Lower lobe of right lung (tissue), 2 donors: ENCODE measurements at regions of chr3 and their contacts with region 1.

Region 1: GRCh38 chr3:194682694-194683310 is 2.9 kb upstream of the FAM43A start:
- DNase-seq: peak; percentile 60
- ATAC-seq: peak; percentile 80
- H3K4me3 ChIP-seq: no peak overlapping the region
- H3K27ac ChIP-seq: peak overlapping the region; percentile 37
- H3K4me1 ChIP-seq: peaks cover 41% of the 10 kb centered on the region
- H3K27me3 ChIP-seq: peaks cover 5% of the 10 kb centered on the region
- CTCF ChIP-seq: peak; percentile 88

Region 2: GRCh38 chr3:194556086-194557056 is 126.4 kb before region 1 on chr3:
- intact Hi-C with region 1: no loop called
- DNase-seq: no peak
- ATAC-seq: peak in 1 of 2 donors; percentile 52
- H3K4me3 ChIP-seq: peak overlapping the region; percentile 27
- H3K27ac ChIP-seq: no peak overlapping the region
- H3K4me1 ChIP-seq: no peaks in the 10 kb centered on the region
- H3K27me3 ChIP-seq: no peaks in the 10 kb centered on the region
- CTCF ChIP-seq: no peak

Region 3: DNA sequence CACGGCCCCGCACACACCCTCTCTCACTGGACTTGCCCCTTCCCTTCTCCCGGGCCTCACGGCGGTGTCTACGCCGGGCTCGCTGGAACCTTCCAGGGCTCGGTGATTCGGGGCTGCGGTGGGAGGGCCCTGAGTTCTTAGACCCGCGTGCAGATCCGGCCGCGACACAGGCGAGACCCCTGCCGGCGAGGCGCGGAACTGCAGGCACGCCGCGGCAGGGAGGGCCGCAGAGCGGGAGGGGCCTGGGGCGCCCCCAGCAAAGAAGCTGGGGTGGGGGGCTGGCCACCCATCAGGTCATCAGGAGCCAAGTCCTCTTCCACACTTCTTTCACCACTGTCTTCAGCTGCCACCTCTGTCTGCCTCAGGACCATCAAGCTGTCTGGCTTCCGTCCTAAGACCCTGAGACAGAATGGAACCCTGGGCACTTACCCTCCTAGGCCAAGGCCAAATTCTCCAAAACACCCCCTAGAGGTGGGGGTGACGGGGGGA is 423.7 kb after region 1 on chr3:
- intact Hi-C with region 1: loop called (anchors 10 kb)
- DNase-seq: peak; percentile 84
- ATAC-seq: peak; percentile 89
- H3K4me3 ChIP-seq: no peak overlapping the region
- H3K27ac ChIP-seq: no peak overlapping the region
- H3K4me1 ChIP-seq: peaks cover 30% of the 10 kb centered on the region
- H3K27me3 ChIP-seq: no peaks in the 10 kb centered on the region
- CTCF ChIP-seq: peak; percentile 100

Region 4: GRCh38 chr3:195259475-195260279 is 576.9 kb after region 1 on chr3:
- intact Hi-C with region 1: loop called (anchors 10 kb)
- DNase-seq: peak; percentile 92
- ATAC-seq: peak; percentile 91 to 96
- H3K4me3 ChIP-seq: peak overlapping the region; percentile 72
- H3K27ac ChIP-seq: peak overlapping the region; percentile 95
- H3K4me1 ChIP-seq: peaks cover 38% of the 10 kb centered on the region
- H3K27me3 ChIP-seq: no peaks in the 10 kb centered on the region
- CTCF ChIP-seq: peak; percentile 57